ENCODE measurements at regions of chr14 and their contacts with region 1.

Region 1: GRCh38 chr14:103391048-103391447 is 5.8 kb downstream of the MARK3 start:
- DNase-seq: peak; percentile 68
- ATAC-seq: peak; percentile 58
- H3K4me3 Mint-ChIP-seq: no peak overlapping the region
- H3K27ac Mint-ChIP-seq: no peak overlapping the region
- H3K4me1 Mint-ChIP-seq: peaks cover 62% of the 10 kb centered on the region
- H3K27me3 Mint-ChIP-seq: no peaks in the 10 kb centered on the region

Region 2: DNA sequence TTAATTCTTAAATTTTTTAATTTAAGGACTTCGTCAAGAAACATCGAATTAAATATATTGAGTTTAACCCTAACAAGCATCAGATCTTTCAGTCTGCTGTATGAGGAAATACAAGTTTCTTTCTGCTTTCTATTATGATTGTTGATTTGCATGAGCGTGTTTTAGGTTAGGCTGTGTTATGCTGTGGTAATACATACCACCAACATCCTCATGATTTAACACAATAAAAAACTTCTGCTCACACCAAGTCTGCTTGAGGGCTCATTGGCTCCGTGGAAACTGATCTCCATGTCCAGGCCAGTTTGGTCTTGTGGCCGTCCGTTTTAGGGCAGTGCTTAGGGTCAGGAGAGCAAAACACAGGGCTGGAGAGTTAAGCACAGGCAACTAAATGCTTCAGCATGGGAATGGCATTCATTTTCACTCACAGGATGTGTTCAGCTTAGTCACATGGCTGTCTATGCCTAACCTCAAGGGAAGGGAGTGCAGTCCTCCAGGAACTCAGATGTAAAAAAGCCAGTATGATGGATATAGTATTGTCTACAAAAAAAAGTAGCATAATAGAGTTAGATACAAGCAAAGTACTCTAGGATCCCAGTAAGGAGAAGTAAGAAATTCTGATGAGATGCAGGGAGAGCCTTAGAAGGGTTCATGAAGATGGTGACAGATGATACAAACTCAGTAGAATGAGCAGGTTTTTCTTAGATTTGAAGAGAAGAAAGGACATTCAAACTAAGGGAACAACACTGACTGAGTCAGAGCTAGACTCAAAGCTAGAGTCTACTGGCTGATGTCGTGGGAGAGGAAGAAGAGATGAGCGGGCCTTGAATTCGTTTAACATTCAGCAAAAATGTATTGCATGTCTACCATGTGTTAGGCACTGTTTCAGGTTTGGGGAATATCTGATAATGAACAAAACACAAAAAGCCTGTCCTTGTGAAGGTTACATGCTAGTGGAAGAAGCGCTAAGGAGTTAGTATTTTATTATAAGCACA is 10.5 kb after region 1 on chr14:
- CTCF ChIA-PET with region 1: interaction called, 18 read pairs
- POLR2A ChIA-PET with region 1: interaction called, 4 read pairs
- intact Hi-C with region 1: no loop called
- DNase-seq: peak; percentile 43
- ATAC-seq: peak; percentile 94
- H3K4me3 Mint-ChIP-seq: peak overlapping the region; percentile 17
- H3K27ac Mint-ChIP-seq: peak overlapping the region; percentile 92
- H3K4me1 Mint-ChIP-seq: peaks cover 63% of the 10 kb centered on the region
- H3K27me3 Mint-ChIP-seq: no peaks in the 10 kb centered on the region

Region 3: DNA sequence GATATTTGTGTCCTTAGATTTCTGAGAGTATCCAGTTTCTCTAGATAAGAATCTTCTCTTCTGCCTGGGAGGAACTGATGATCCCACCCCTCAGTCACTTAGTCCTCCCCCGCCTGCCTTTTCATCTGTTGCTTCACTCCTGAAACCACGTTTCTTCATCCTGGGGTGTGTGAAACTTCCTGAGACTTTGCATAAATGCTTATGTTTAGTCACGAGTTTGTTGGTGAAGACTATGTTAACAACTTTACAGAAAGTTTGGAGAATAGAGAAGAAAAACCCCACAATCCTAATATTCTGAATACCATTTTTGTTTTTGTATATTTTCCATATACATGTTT is 27.4 kb after region 1 on chr14:
- CTCF ChIA-PET with region 1: interaction called, 44 read pairs
- POLR2A ChIA-PET with region 1: no interaction called
- intact Hi-C with region 1: loop called in 1 of 2 experiments (anchors 5 kb)
- DNase-seq: peak; percentile 30
- ATAC-seq: peak; percentile 63
- H3K4me3 Mint-ChIP-seq: no peak overlapping the region
- H3K27ac Mint-ChIP-seq: peak overlapping the region; percentile 80
- H3K4me1 Mint-ChIP-seq: peaks cover 47% of the 10 kb centered on the region
- H3K27me3 Mint-ChIP-seq: no peaks in the 10 kb centered on the region

Region 4: DNA sequence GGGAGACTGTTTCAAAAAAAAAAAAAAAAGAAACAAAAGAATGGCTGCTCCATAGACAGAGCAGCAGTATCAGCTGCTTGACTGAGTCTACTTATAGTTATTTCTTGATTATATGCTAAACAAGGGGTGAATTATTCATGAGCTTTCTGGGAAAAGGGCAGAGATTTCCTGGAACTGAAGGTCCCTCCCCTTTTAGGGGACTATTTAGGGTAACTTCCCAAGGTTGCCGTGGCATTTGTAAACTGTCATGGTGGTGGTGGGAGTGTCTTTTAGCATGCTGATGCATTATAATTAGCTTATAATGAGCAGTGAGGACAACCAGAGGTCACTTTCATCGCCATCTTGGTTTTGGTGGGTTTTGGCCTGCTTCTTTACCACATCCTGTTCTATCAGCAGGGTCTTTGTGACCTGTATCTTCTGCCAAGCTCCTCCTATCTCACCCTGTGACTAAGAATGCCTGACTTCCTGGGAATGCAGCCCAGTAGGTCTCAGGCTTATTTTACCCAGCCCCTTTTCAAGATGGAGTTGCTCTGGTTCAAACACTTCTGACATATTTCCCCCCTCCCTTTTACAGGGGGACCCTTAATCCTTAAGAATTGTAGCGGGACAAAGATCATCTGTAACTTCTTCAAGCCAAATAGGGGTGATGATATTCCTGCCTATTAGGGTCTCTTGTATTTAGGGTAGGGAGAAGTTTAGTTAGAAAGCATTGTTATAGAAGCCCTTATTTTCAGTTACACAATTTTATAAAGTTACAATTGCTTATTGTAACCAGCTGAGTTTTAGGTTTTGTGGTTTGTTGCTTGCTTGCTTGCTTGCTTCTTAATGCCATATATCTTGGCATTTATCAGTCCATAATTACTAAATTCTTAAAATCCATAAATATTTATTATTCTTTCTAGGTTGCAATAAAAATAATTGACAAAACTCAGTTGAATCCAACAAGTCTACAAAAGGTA is 36.7 kb after region 1 on chr14:
- CTCF ChIA-PET with region 1: interaction called, 13 read pairs
- POLR2A ChIA-PET with region 1: interaction called, 3 read pairs
- intact Hi-C with region 1: loop called (anchors 2 to 5 kb)
- DNase-seq: peak; percentile 60
- ATAC-seq: peak; percentile 75
- H3K4me3 Mint-ChIP-seq: no peak overlapping the region
- H3K27ac Mint-ChIP-seq: peak overlapping the region; percentile 79
- H3K4me1 Mint-ChIP-seq: peaks cover 50% of the 10 kb centered on the region
- H3K27me3 Mint-ChIP-seq: no peaks in the 10 kb centered on the region